Heart right ventricle (tissue), 16 donors: ENCODE measurements at regions of chr11 and their contacts with region 1.

Region 1: DNA sequence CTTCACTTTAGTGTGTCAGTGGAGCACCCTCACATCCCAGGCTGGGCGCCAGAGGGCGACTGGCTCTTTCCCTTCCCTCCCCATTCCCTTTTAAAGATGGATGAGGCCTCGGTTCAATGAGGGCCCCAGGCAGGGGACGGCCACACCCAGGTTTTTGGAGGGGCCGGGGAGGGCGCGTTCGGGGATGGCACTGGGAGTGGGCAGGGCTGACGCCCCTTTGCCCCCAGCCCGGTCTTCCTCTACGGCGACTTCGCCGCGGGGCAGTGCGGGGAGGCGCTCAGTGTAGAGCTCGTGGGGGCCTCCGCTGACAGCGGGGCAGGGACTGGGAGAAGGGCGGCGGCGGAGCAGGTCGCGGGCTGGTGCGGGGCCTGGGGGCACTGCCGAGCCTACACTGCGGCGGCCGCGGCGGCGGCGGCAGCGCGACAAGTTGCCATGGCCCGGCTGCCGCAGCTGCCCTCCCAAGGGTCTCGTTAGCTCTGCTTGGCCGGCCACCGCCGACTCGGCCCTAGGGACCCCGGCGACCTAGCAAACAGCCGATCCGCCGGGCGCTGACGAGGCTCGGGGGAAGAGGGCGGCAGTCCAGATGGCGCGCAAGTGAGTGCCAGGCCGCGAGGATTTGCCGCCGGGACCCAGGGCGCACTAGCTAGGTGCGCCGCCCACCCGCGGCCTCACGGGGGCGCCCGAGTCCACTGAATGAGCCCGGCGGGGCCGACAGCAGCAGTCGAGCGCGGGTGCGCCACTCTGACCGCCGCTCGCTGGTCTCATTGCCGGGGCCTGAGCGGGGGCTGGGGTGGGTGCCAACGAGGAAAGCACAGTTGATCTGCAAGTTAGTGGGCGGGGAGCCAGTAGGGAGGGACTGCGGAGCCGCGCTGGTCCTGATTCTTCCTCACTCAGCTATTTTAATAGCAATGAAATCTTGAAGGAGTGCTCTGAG is 92.7 kb downstream of the RRM1 start:
- DNase-seq: peak; percentile 89 to 93
- ATAC-seq: peak; percentile 83 to 94 (median 89)
- H3K4me3 ChIP-seq: peak overlapping the region; percentile 36 to 70 (median 64)
- H3K27ac ChIP-seq: peak overlapping the region in 8 of 10 donors; percentile 7 to 66 (median 38)
- H3K4me1 ChIP-seq: peaks cover 0 to 20% (median 5%) of the 10 kb centered on the region in 9 donors
- H3K27me3 ChIP-seq: no peaks in the 10 kb centered on the region
- CTCF ChIP-seq: peak; percentile 94 to 98 (median 96)

Region 2: GRCh38 chr11:4393209-4393857 is 206.0 kb after region 1 on chr11 and contains the start of gene TRIM21:
- intact Hi-C with region 1: loop called in 1 of 10 experiments (anchors 5 kb)
- DNase-seq: peak; percentile 78 to 90
- ATAC-seq: peak; percentile 98 to 100 (median 99)
- H3K4me3 ChIP-seq: peak within 1 kb of the TSS; percentile 64 to 99 (median 87)
- H3K27ac ChIP-seq: peak within 1 kb of the TSS; percentile 65 to 98 (median 86)
- H3K4me1 ChIP-seq: peaks cover 0 to 24% (median 12%) of the 10 kb centered on the region in 9 donors
- H3K27me3 ChIP-seq: peaks cover 0 to 7% (median 0%) of the 10 kb centered on the region in 7 donors
- CTCF ChIP-seq: no peak
- total RNA-seq, gene TRIM21: 4.4 to 36.8 (median 7.4) TPM

Region 3: DNA sequence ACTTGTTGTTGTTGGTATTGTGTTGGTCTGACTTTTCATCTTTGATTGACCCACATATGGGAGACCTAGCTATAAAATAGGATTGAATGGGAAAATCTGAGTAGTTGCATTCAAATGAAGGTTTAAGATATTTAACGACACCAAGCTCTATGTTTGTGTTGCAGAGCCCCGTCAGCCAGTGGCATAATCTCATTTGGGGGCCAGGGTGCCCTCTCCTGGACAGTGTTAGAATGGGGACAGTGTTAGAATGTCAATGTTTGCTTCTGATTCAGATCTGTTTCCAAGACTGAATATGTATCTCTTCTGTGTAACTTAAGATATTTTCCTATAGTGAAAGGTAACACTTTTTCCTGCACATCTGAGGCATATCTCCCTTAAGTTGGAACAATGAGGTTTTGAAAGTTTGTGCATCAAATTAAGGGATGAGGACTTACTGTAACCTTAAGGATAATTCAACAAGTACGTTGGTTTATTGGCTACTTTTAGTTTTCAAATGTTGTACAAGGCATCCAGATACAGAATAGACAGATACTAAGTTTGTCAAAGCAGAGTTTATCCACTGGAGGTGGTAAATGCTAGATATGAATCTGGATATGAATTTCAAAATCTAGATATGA is 352.4 kb after region 1 on chr11:
- intact Hi-C with region 1: loop called (anchors 1 to 5 kb)
- DNase-seq: peak; percentile 24 to 41
- ATAC-seq: peak in 7 of 8 donors; percentile 65 to 87 (median 76)
- H3K4me3 ChIP-seq: no peak overlapping the region
- H3K27ac ChIP-seq: no peak overlapping the region
- H3K4me1 ChIP-seq: no peaks in the 10 kb centered on the region
- H3K27me3 ChIP-seq: peaks cover 0 to 14% (median 0%) of the 10 kb centered on the region in 7 donors
- CTCF ChIP-seq: peak; percentile 36 to 81 (median 66)

Region 4: GRCh38 chr11:4643076-4643475 is 455.8 kb after region 1 on chr11:
- intact Hi-C with region 1: loop called in 1 of 10 experiments (anchors 10 kb)
- DNase-seq: peak; percentile 40 to 85
- ATAC-seq: peak; percentile 62 to 90 (median 78)
- H3K4me3 ChIP-seq: peak overlapping the region in 6 of 10 donors; percentile 34 to 58 (median 51)
- H3K27ac ChIP-seq: peak overlapping the region in 9 of 10 donors; percentile 64 to 91 (median 82)
- H3K4me1 ChIP-seq: peaks cover 4 to 59% (median 38%) of the 10 kb centered on the region in 9 donors
- H3K27me3 ChIP-seq: no peaks in the 10 kb centered on the region
- CTCF ChIP-seq: no peak

Region 5: DNA sequence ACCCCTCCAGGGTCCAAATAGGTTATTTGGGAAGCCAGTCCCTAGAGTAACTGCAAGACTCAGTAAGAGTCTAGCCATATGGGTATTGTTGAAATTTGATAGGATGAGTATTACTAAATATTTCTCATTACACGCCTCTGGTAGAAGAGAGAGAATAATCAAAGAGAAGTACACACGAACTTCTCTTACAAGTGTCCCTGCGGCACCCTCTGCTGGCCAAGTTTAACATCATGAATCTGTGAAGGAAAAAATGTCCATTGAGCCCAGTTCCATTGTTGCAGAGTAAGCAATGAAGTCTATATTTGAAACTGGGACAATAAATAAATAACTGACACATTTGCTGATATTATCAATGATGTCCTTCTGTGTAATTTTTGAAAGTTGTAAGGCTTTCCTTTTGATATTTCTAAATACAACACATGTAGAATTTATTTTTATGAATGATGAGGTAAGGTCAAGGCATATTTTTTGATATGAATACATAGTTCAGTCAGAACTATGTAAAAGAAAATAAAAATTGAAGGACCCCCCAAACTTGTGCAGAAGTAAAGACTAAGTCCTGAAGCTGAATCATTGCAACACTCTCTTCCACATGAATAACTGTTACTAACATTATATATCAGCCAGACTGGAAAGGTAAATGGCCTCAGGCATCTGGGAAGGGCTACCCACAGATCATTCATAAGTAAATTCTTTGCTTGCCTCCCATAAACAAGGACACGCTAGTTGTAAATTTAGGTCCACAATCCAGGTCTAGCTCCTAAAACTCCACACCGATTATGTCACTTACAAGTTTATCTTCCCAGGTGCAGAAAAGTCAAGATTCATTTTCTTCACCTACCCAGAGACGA is 817.3 kb after region 1 on chr11:
- intact Hi-C with region 1: loop called in 2 of 10 experiments (anchors 5 to 10 kb)
- DNase-seq: peak; percentile 21 to 34
- ATAC-seq: peak in 2 of 8 donors; percentile 41 to 44
- H3K4me3 ChIP-seq: no peak overlapping the region
- H3K27ac ChIP-seq: no peak overlapping the region
- H3K4me1 ChIP-seq: no peaks in the 10 kb centered on the region
- H3K27me3 ChIP-seq: peaks cover 0 to 6% (median 0%) of the 10 kb centered on the region in 7 donors
- CTCF ChIP-seq: peak; percentile 24 to 74 (median 63)